ENCODE measurements at regions of chrX and their contacts with region 1.

Region 1: DNA sequence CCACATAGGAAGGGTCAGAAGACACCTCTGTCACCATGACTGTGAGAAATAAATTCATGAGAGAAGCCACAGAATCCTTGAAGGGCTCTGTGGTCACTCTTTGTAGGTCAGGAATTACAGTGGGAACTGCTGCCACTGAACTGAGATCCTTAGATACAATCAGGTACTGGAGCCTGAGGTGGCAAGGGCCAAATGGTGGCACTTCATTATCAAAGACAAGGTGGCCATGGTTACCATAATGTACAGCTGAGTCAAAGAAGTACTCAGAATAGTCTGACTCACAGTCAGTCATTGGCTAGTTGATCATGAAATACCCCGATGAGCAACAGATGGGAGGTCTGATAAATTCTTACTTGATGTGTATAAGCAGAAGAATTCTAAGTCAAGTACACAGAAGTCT is 131.9 kb downstream of the RTL3 start:
- DNase-seq: no peak
- CTCF ChIP-seq: no peak

Region 2: DNA sequence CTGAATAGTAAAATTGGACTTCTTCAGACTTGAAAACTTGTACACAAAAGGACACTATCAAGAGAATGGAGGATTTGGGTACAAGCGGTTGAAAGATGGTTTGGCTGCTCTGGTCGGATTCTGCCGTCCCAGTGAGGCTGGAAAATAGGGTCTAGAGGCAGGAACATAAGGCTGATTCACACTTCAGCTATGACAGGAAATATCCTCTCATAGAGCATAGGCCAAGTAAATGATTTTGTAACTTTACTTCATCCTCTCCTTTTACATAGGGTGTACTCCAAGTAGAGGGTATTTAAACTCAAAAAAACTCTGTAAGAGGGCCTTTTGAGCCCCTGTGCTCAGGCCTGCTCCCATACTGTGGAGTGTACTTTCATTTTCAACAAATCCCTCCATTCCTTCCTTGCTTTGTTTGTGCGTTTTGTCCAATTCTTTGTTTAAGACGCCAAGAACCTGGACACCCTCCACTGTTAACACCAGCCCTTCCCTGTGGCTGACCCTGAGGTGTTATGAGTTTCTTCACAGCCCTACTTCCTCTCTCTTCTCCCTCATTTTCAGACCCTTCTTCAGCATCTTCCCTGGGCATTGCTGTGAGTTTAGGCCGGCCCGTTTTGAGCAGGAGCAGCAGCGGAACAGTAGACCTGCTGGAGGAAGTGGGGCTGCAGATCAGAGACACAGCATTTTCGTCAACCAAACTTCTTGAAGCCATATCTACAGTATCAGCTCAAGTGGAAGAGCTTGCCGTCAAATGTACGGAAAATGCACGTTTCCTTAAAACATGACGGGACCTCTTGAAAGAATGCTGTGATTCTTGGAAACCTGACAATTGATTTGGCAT is 565.0 kb before region 1 on chrX:
- in situ Hi-C with region 1: no loop called
- DNase-seq: no peak
- CTCF ChIP-seq: no peak

Region 3: GRCh38 chrX:79444694-79445210 is 917.5 kb after region 1 on chrX:
- in situ Hi-C with region 1: loop called (anchors 25 kb)
- DNase-seq: no peak
- CTCF ChIP-seq: no peak